Activated T-helper 1 cell treated with anti-CD3 and anti-CD28 coated beads, Interleukin-12 subunit alpha, Interleukin-12 subunit beta, Interleukin-2, Interleukin-4 antibody, amounts not matched to agents 30 ng/mL and 10 ng/mL and 1 ng/mL, durations not matched to agents 14 hours and 24 hours and 36 hours (primary cell): ENCODE measurements at regions of chr4 and their contacts with region 1.

Region 1: DNA sequence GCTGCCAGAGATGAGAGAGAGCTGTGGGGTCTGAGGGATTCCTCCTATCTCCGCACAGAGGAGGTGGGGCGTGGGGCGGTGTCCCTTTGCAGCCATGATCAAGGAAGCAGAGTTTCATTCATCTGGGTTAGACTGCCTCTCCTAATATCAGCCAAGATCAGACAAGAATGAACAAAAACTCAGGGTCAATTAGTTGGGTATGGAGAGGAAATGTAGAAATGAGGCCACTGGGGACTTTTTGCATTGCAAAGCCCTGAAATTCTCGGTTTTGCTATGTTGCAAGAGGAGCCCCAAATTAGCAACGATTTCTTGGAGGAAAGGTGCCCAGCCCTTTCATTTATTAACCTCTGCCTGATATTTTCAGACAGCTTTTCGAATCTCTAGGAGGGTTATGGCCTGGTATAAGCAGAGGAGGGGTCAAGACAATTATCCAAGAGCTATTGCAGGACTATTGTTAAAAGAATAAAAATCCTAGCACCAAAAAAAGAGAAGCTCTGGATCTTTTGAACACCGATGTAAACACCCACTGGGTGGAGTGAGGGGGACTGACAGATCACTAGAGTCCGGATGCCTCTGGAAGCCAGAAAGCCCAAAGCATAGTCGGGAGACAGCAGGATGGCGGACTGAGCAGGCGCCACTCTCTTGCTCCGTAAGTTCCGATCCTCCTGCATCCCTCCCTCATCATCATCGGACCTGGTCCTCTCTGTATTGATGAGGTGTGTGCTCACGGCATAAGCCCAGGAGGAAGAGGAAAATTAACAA is 34.4 kb upstream of the ACSL1 start:
- DNase-seq: no peak
- H3K4me3 Mint-ChIP-seq: peak overlapping the region; percentile 50
- H3K27ac Mint-ChIP-seq: peak overlapping the region; percentile 67
- H3K4me1 Mint-ChIP-seq: peaks cover 46% of the 10 kb centered on the region
- H3K27me3 Mint-ChIP-seq: peaks cover 4% of the 10 kb centered on the region

Region 2: DNA sequence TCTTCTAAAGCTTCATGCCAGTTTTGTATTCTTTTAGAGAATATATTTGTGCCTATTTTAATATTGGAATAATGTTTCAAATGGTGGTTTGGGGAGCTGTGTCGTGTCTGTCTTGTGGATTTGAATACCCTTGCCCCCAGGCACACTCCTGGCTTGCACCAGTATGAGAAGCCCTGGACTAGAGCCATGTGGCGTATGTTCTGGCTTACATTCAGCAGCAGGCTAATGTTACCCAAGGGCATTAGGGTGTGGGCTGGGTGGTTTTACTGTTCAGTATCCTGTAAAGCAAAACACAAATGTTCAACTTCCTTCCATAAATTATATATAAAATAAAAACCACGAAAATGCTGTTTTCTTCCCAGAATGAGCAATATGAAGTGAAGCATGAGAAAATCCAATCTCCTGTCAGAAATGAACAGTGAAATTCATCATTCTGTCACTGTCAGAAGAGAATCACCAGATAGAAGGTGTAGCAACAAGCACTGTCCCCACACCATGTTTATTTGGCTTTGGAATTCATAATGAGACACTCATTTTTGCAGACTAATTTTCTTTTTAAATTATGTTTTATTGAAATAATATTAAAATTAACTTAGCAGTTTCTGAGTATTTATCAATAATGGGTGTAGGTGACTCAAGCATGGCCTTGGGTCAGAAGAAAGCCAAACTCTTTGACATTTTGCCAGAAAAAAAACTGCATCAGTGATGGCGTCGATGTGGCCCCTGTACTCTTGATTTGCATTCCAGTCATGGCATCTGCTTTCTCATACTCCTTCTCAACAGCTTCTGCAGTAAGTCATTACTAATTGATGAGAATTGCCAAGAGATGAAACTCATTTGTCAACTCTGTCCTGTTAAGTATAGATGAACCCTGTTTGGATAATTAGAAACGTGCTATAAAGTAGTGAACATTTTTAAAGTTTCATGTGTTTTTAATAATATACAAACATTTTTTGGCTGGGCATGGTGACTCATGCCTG is 1717.3 kb before region 1 on chr4:
- intact Hi-C with region 1: no loop called
- DNase-seq: no peak
- H3K4me3 Mint-ChIP-seq: no peak overlapping the region
- H3K27ac Mint-ChIP-seq: no peak overlapping the region
- H3K4me1 Mint-ChIP-seq: no peaks in the 10 kb centered on the region
- H3K27me3 Mint-ChIP-seq: peaks cover 3% of the 10 kb centered on the region

Region 3: GRCh38 chr4:184932343-184932742 is 72.1 kb after region 1 on chr4:
- intact Hi-C with region 1: loop called (anchors 5 kb)
- DNase-seq: peak; percentile 22
- H3K4me3 Mint-ChIP-seq: no peak overlapping the region
- H3K27ac Mint-ChIP-seq: no peak overlapping the region
- H3K4me1 Mint-ChIP-seq: peaks cover 21% of the 10 kb centered on the region
- H3K27me3 Mint-ChIP-seq: peaks cover 22% of the 10 kb centered on the region

Region 4: GRCh38 chr4:185033950-185034349 is 173.8 kb after region 1 on chr4:
- intact Hi-C with region 1: no loop called
- DNase-seq: no peak
- H3K4me3 Mint-ChIP-seq: no peak overlapping the region
- H3K27ac Mint-ChIP-seq: no peak overlapping the region
- H3K4me1 Mint-ChIP-seq: no peaks in the 10 kb centered on the region
- H3K27me3 Mint-ChIP-seq: peaks cover 39% of the 10 kb centered on the region